ENCODE measurements at regions of chr6 and their contacts with region 1.

Region 1: DNA sequence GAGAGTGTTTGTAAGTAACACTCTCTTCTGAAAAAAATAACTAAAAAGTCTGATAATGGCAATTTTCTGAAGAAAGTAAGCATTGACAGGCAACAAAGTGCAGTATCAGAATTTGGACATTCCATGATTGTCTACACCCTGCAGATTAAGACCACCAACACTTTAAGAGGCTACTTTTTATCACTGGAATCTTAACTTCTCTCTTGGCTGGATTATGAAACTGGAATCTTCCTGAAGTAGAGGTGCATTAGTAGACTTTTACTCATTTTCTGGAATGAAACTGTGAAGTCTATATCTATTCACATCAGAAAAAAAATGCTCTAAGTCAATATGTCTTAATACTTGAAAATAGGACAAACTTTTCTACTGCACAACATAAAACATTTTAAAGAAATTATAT is 547.5 kb downstream of the COL12A1 start:
- DNase-seq: no peak
- CTCF ChIP-seq: no peak

Region 2: GRCh38 chr6:74645108-74645849 is 13.1 kb before region 1 on chr6:
- CTCF ChIA-PET with region 1: no interaction called
- POLR2A ChIA-PET with region 1: no interaction called
- DNase-seq: no peak
- CTCF ChIP-seq: no peak

Region 3: GRCh38 chr6:74671558-74672025 is 13.2 kb after region 1 on chr6:
- CTCF ChIA-PET with region 1: interaction called, 10 read pairs
- POLR2A ChIA-PET with region 1: no interaction called
- DNase-seq: no peak
- CTCF ChIP-seq: no peak

Region 4: GRCh38 chr6:74785236-74785635 is 126.8 kb after region 1 on chr6:
- CTCF ChIA-PET with region 1: no interaction called
- POLR2A ChIA-PET with region 1: no interaction called
- DNase-seq: no peak
- CTCF ChIP-seq: no peak

Measured in GM10248 (cell line).